Activated naive CD4-positive, alpha-beta T cell treated with anti-CD3 and anti-CD28 coated beads for 36 hours (primary cell): ENCODE measurements at regions of chr19 and their contacts with region 1.

Region 1: DNA sequence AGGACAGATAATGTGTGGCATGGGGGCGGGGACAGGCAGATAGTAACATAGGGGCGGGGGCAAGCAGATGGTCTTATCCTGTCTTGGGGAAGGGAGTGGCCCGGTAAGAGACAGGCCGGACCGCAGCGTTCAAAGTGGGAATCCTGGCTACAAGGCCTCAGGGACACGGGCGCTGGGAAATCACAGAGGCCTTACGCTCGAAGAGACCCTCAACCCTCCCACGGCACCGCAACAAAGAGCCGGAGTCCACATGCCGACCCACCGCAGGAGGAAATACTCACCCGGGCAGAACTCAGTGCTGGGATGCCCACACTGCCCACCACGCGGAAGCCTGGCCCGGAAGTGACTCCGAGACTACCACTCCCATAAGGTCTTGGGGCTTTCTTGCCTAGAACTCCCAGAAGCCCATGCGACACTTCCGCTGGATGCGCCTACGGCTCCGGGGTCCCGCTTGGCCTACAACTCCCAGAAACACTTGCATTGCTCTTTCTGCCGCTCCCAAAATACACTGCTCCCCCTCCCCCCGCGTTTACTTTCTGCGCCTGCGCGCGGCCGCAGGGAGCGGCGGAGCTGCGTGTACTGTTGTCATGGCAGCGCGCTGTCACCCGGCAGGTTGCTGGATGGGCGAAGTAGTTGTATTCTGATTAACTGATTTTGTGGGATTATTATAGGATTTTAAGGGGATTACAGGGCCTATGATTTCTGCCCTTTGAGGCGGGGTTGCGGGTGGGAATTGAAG is at the start of gene CTU1:
- DNase-seq: peak; percentile 99
- H3K4me3 Mint-ChIP-seq: peak within 1 kb of the TSS; percentile 98
- H3K27ac Mint-ChIP-seq: peak within 1 kb of the TSS; percentile 84
- H3K4me1 Mint-ChIP-seq: peaks cover 40% of the 10 kb centered on the region
- H3K27me3 Mint-ChIP-seq: no peaks in the 10 kb centered on the region
- total RNA-seq, gene CTU1: 9.2 to 9.9 TPM

Region 2: GRCh38 chr19:50724522-50725217 is 383.6 kb before region 1 on chr19:
- CTCF ChIA-PET with region 1: no interaction called
- intact Hi-C with region 1: loop called (anchors 10 kb)
- DNase-seq: peak; percentile 99
- H3K4me3 Mint-ChIP-seq: peak overlapping the region; percentile 74
- H3K27ac Mint-ChIP-seq: no peak overlapping the region
- H3K4me1 Mint-ChIP-seq: peaks cover 27% of the 10 kb centered on the region
- H3K27me3 Mint-ChIP-seq: peaks cover 51% of the 10 kb centered on the region

Region 3: DNA sequence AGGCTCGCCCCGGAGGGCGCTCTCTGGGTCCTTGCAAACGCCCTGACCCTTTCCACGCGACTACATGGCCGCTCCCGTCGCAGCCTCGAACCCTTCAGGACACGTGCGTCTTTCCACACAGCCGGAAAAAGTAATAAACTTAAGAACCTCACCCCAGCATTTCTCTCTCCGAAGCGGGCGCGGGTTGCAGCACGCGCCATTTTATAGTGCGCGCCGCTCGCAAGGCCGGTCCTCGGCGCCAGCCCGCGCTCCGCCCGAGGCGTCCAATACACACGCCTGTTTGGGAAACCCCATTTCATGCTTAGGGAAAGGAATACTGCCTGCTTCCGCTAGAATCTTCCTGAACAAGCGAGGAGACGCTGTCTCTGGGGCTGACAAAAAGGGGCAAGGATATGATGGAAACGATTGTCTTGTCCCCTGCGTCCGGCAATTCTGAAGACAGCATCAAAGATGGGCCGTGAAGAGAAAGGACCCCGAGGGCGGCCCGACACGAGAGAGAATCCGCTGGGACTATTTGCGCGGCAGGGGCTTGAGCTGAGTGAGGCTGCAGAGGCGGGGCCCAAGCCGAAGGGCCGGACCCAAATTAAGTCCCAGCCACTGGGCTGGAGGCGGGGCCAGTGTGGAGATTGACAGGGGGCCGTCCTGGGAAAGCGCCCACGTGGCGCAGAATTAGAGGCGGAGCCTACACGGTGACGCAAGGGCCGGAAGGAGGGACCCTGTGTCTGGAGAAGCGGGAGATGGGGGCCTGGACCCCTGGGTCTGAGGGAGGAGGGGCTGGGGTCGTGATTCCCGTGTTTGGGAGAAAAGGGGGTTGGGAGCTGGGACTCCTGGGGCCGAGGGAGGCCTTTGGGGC is 303.6 kb before region 1 on chr19:
- CTCF ChIA-PET with region 1: no interaction called
- intact Hi-C with region 1: loop called (anchors 5 kb)
- DNase-seq: peak; percentile 99
- H3K4me3 Mint-ChIP-seq: peak overlapping the region; percentile 98
- H3K27ac Mint-ChIP-seq: peak overlapping the region; percentile 100
- H3K4me1 Mint-ChIP-seq: peaks cover 28% of the 10 kb centered on the region
- H3K27me3 Mint-ChIP-seq: no peaks in the 10 kb centered on the region

Region 4: GRCh38 chr19:51181913-51182419 is 73.7 kb after region 1 on chr19:
- CTCF ChIA-PET with region 1: no interaction called
- intact Hi-C with region 1: no loop called
- DNase-seq: no peak
- H3K4me3 Mint-ChIP-seq: no peak overlapping the region
- H3K27ac Mint-ChIP-seq: no peak overlapping the region
- H3K4me1 Mint-ChIP-seq: no peaks in the 10 kb centered on the region
- H3K27me3 Mint-ChIP-seq: peaks cover 10% of the 10 kb centered on the region

Region 5: GRCh38 chr19:51367565-51368365 is 259.5 kb after region 1 on chr19:
- CTCF ChIA-PET with region 1: no interaction called
- intact Hi-C with region 1: loop called (anchors 5 kb)
- DNase-seq: peak; percentile 99
- H3K4me3 Mint-ChIP-seq: peak overlapping the region; percentile 94
- H3K27ac Mint-ChIP-seq: peak overlapping the region; percentile 95
- H3K4me1 Mint-ChIP-seq: peaks cover 58% of the 10 kb centered on the region
- H3K27me3 Mint-ChIP-seq: no peaks in the 10 kb centered on the region

Region 6: DNA sequence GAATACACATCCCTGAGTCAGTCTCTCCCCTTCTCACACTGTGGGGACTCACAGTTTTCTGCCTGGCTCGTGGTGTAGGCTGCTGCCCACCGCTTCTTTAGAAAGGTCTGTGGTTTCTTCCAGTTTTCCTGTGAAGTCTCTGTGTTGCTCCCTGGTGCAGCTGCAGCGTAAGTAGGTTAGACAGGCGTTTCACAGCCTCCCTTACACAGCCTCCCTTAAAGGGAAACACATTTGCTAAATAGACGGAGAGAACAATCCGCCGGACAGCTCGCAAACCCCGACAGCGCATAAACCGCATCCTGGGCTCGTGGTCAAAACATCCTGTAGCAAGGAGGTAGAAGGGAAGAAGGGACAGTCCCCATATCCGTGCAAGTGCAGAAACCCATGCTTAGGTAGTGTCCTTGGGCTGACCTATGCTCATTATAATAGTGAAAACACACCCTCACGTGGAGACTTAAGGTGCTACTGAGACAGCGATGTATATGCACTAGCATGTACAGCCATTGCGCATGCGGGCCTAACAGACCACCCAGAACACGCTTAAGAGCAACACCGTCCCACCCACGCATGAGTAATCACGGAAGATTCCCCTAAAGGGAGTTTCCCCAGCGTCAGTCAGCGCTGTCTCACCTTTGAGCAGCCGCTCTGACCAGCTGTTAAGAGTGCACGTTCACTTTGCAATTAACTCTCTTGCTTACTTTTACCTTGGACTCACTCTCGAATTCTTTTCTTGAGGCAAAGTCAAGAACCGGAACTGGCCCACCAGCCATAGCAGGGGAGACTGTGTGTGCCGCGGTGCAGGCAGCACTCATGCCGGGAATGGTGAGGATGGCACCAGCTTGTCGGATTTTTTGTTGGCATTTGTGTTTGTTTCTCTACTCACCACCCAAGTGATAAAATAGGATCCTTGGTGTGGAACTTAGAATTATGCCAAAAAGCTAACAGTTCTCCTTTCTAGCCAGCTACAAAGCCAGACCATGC is 333.5 kb after region 1 on chr19:
- CTCF ChIA-PET with region 1: no interaction called
- intact Hi-C with region 1: loop called (anchors 5 kb)
- DNase-seq: peak; percentile 95
- H3K4me3 Mint-ChIP-seq: peak overlapping the region; percentile 62
- H3K27ac Mint-ChIP-seq: peak overlapping the region; percentile 87
- H3K4me1 Mint-ChIP-seq: peaks cover 43% of the 10 kb centered on the region
- H3K27me3 Mint-ChIP-seq: peaks cover 4% of the 10 kb centered on the region

Region 7: GRCh38 chr19:51593969-51594773 is 485.9 kb after region 1 on chr19:
- CTCF ChIA-PET with region 1: no interaction called
- intact Hi-C with region 1: loop called (anchors 5 kb)
- DNase-seq: peak; percentile 97
- H3K4me3 Mint-ChIP-seq: peak overlapping the region; percentile 89
- H3K27ac Mint-ChIP-seq: peak overlapping the region; percentile 68
- H3K4me1 Mint-ChIP-seq: peaks cover 11% of the 10 kb centered on the region
- H3K27me3 Mint-ChIP-seq: no peaks in the 10 kb centered on the region